Activated CD8-positive, alpha-beta memory T cell treated with anti-CD3 and anti-CD28 coated beads, Interleukin-2, amount 10 ng/mL, durations not matched to agents 7 days and 5 days (primary cell): ENCODE measurements at regions of chr3 and their contacts with region 1.

Region 1: GRCh38 chr3:122942937-122943827 is 84.4 kb downstream of the SEMA5B start:
- DNase-seq: no peak
- ATAC-seq: peak; percentile 43
- H3K4me3 Mint-ChIP-seq: no peak overlapping the region
- H3K27ac Mint-ChIP-seq: no peak overlapping the region
- H3K4me1 Mint-ChIP-seq: peaks cover 10% of the 10 kb centered on the region
- H3K27me3 Mint-ChIP-seq: peaks cover 31% of the 10 kb centered on the region

Region 2: GRCh38 chr3:122975163-122975923 is 32.2 kb after region 1 on chr3:
- CTCF ChIA-PET with region 1: interaction called, 12 read pairs
- DNase-seq: peak; percentile 77
- ATAC-seq: peak; percentile 78
- H3K4me3 Mint-ChIP-seq: peak overlapping the region; percentile 64
- H3K27ac Mint-ChIP-seq: peak overlapping the region; percentile 81
- H3K4me1 Mint-ChIP-seq: peaks cover 44% of the 10 kb centered on the region
- H3K27me3 Mint-ChIP-seq: peaks cover 30% of the 10 kb centered on the region

Region 3: DNA sequence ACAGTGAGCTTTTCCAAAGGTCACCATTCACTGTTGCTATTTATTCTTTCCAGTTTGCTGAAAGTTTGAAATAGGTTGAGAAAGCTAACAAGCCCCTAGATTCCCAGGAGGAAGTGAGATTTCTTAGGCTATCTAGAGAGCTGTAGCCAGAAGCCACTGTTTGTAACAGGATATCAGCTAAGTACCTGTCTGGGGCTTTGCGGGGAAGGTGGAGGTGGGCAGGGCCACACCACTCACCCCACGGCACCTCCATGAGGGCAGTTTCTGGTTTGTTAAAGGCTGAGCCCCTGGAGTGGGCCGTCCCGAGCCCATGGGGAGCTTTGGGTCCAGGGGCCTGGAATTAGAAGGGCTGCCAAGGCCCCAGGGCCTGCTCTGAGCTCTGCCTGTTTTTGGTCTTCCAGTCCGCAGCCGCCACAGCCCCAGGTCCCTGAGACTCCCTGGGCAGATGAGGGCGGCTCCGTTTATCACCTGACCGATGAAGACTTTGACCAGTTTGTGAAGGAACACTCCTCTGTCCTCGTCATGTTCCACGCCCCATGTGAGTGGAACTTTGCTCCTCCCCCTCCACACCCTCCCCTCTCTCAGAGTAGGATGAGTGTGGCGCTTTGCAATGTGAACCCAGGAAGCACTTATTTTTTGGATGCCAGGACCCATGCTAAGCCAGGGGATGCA is 187.0 kb after region 1 on chr3:
- CTCF ChIA-PET with region 1: no interaction called
- DNase-seq: no peak
- ATAC-seq: no peak
- H3K4me3 Mint-ChIP-seq: no peak overlapping the region
- H3K27ac Mint-ChIP-seq: no peak overlapping the region
- H3K4me1 Mint-ChIP-seq: no peaks in the 10 kb centered on the region
- H3K27me3 Mint-ChIP-seq: no peaks in the 10 kb centered on the region